ENCODE measurements at regions of chr1 and their contacts with region 1.

Region 1: GRCh38 chr1:202716654-202717053 is 6.4 kb upstream of the SYT2 start:
- DNase-seq: no peak
- ATAC-seq: peak in 3 of 4 donors; percentile 26 to 60 (median 35)
- H3K4me3 ChIP-seq: no peak overlapping the region
- H3K27ac ChIP-seq: no peak overlapping the region
- H3K4me1 ChIP-seq: no peaks in the 10 kb centered on the region
- H3K27me3 ChIP-seq: peaks cover 0 to 8% (median 1%) of the 10 kb centered on the region in 3 donors
- CTCF ChIP-seq: no peak

Region 2: DNA sequence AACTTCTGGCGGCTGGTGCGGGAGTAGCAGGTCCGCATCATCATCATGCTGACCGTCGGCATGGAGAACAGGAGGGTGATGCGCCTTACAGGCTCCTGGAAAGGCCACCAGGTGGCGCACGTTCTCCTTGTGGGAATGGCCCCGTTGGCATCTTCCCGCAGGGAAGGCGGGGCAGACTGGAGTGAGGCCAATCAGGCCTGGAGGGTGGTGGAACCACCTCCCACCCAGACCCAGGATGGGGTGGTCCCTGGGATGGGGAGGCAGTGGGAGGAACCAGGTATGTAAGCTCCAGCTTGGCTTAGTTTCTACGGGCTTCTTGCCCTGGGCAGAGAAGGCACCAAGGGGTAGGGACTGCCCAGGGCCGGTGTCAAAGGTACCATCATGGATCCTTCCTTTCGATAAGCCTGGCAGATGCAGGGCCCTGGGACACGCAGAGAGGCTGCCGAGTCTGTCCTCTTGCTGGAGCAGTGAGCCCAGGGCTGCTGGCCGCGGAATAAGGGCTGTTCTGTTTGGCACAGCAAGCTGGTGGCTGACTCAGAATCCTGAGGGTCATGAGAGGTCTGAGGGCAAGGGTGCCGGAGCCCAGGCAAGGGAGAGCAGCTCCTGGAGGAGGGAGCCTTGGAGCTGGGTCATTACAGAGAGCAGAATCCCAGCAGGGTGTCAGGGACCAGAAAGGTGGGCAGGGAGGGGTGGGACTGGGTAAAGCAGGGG is 531.7 kb before region 1 on chr1:
- intact Hi-C with region 1: loop called (anchors 2 to 5 kb)
- DNase-seq: peak; percentile 81 to 89
- ATAC-seq: peak; percentile 68 to 88 (median 80)
- H3K4me3 ChIP-seq: no peak overlapping the region
- H3K27ac ChIP-seq: no peak overlapping the region
- H3K4me1 ChIP-seq: no peaks in the 10 kb centered on the region
- H3K27me3 ChIP-seq: no peaks in the 10 kb centered on the region
- CTCF ChIP-seq: peak; percentile 77

Region 3: DNA sequence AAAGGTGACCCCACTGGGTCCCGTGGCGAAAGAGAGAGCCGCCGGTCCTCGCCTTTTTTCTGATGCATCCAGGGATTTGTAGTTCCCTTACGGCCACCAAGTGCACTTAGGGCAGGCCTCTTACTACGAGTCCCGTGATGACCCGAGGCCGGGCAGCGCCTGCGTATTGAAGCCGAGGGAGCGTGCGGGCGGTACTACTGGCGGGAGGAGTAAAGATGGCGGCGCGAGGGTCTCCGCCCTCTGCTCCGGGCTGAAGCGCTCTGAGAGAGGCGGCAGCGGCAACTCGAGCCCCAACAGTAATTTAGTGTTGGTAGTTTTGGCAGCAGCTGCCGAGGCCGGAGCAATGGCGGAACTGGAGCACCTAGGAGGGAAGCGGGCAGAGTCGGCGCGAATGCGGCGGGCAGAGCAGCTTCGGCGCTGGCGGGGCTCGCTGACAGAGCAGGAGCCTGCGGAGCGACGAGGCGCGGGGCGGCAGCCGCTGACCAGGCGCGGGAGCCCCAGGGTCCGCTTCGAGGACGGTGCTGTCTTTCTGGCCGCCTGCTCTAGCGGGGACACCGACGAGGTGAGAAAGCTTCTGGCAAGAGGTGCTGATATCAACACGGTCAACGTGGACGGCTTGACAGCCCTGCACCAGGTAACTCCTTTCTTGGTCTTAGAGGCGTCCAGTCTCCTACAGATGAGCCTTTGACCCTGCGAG is 368.0 kb before region 1 on chr1 and contains the start of gene PPP1R12B:
- intact Hi-C with region 1: loop called in 1 of 2 experiments (anchors 5 kb)
- DNase-seq: peak; percentile 97 to 99
- ATAC-seq: peak; percentile 95 to 99 (median 98)
- H3K4me3 ChIP-seq: peak within 1 kb of the TSS; percentile 76
- H3K27ac ChIP-seq: peak within 1 kb of the TSS; percentile 90
- H3K4me1 ChIP-seq: peaks cover 23% of the 10 kb centered on the region
- H3K27me3 ChIP-seq: no peaks in the 10 kb centered on the region
- CTCF ChIP-seq: no peak
- total RNA-seq, gene PPP1R12B: 86.1 to 189 (median 158) TPM

Region 4: GRCh38 chr1:202365092-202365815 is 351.4 kb before region 1 on chr1:
- intact Hi-C with region 1: no loop called
- DNase-seq: peak in 1 of 2 donors; percentile 25
- ATAC-seq: peak; percentile 49 to 79 (median 67)
- H3K4me3 ChIP-seq: no peak overlapping the region
- H3K27ac ChIP-seq: peak overlapping the region; percentile 53
- H3K4me1 ChIP-seq: peaks cover 25% of the 10 kb centered on the region
- H3K27me3 ChIP-seq: no peaks in the 10 kb centered on the region
- CTCF ChIP-seq: no peak

Region 5: GRCh38 chr1:202405928-202406327 is 310.7 kb before region 1 on chr1:
- intact Hi-C with region 1: no loop called
- DNase-seq: no peak
- ATAC-seq: peak; percentile 38 to 71 (median 58)
- H3K4me3 ChIP-seq: peak overlapping the region; percentile 60
- H3K27ac ChIP-seq: peak overlapping the region; percentile 97
- H3K4me1 ChIP-seq: peaks cover 27% of the 10 kb centered on the region
- H3K27me3 ChIP-seq: no peaks in the 10 kb centered on the region
- CTCF ChIP-seq: no peak

Region 6: GRCh38 chr1:202462342-202463076 is 254.1 kb before region 1 on chr1:
- intact Hi-C with region 1: loop called in 1 of 2 experiments (anchors 5 kb)
- DNase-seq: no peak
- ATAC-seq: no peak
- H3K4me3 ChIP-seq: no peak overlapping the region
- H3K27ac ChIP-seq: peak overlapping the region; percentile 87
- H3K4me1 ChIP-seq: peaks cover 69% of the 10 kb centered on the region
- H3K27me3 ChIP-seq: no peaks in the 10 kb centered on the region
- CTCF ChIP-seq: no peak

Region 7: GRCh38 chr1:202576816-202577215 is 139.8 kb before region 1 on chr1:
- intact Hi-C with region 1: loop called in 1 of 2 experiments (anchors 5 kb)
- DNase-seq: no peak
- ATAC-seq: peak in 3 of 4 donors; percentile 48 to 62 (median 58)
- H3K4me3 ChIP-seq: no peak overlapping the region
- H3K27ac ChIP-seq: peak overlapping the region; percentile 64
- H3K4me1 ChIP-seq: peaks cover 60% of the 10 kb centered on the region
- H3K27me3 ChIP-seq: no peaks in the 10 kb centered on the region
- CTCF ChIP-seq: no peak

Region 8: DNA sequence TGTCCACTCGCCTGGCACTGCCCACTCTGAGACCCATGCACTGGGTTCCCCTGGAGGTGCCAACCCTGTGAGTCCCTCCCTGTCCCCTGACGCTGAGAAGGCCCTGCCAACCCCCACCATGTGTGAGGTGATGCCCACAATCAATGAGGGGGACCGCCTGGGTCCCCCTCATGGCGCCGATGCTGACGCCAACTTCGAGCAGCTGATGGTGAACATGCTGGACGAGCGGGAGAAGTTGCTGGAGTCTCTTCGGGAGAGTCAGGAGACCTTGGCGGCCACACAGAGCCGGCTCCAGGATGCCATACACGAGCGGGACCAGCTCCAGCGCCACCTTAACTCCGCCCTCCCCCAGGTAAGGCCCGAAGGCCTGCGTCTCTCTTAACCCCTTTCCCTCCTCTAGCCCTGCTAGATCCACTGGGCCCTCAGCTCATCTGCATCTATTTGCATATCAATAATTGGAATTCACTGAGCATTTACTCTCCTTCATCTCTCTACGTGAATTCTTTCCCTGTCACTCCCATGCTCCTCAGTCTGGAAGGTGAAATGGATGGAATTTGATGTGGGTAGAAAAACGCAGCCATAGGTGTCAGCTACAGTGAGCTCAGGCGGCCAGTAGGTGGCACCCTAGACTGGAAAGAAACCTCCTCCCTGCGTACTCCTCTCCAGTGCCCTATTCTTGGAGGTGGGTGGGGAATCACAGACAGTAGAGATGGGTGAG is 322.4 kb after region 1 on chr1:
- intact Hi-C with region 1: no loop called
- DNase-seq: peak; percentile 72 to 89
- ATAC-seq: peak; percentile 59 to 75 (median 62)
- H3K4me3 ChIP-seq: peak overlapping the region; percentile 30
- H3K27ac ChIP-seq: peak overlapping the region; percentile 97
- H3K4me1 ChIP-seq: peaks cover 73% of the 10 kb centered on the region
- H3K27me3 ChIP-seq: no peaks in the 10 kb centered on the region
- CTCF ChIP-seq: peak; percentile 87

Measured in psoas muscle (tissue), 8 donors.